Activated CD8-positive, alpha-beta T cell treated with anti-CD3 and anti-CD28 coated beads for 36 hours (primary cell): ENCODE measurements at regions of chr17 and their contacts with region 1.

Region 1: DNA sequence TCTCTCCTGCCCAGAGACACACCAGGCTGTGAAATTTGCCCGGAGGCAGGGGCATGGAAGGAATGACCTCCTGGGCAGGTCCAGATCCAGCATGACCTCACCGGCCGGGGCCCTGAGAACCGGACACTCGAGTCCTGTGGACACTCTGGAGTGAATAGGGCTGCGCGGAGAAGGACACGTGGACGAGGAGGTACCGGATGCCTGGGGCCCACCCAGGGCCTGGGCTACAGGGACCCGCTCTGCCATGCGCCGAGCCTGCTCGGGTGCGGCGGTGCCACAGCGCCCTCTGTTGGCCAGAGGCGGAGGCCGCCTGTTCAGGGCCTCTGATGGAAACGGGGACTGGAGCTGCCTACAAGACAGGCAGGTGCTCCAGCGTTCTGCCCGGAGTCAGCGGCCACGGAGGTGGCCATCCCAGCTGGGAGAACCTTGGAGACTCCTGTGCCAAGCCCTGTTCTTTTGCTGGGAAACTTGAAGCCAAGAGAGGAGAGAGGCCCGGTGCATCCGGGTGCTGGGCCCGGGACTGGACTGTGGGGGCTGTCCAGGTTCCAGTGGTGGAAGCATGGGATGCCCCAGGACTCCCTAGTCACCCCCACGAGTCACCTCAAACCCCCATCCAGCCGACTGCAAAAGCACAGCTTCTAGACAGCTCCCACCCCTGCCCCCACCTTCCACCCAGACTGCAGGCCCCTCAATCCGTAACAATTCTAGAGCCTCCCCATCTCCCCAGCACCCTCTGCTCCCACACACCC is 19.3 kb upstream of the NXPH3 start:
- DNase-seq: peak; percentile 90
- ATAC-seq: peak; percentile 98
- H3K4me3 Mint-ChIP-seq: no peak overlapping the region
- H3K27ac Mint-ChIP-seq: peak overlapping the region; percentile 20
- H3K4me1 Mint-ChIP-seq: peaks cover 2% of the 10 kb centered on the region
- H3K27me3 Mint-ChIP-seq: peaks cover 2% of the 10 kb centered on the region
- CTCF ChIP-seq: peak; percentile 98

Region 2: GRCh38 chr17:49327835-49328784 is 228.3 kb before region 1 on chr17:
- CTCF ChIA-PET with region 1: no interaction called
- POLR2A ChIA-PET with region 1: no interaction called
- intact Hi-C with region 1: no loop called
- DNase-seq: no peak
- ATAC-seq: peak; percentile 69
- H3K4me3 Mint-ChIP-seq: no peak overlapping the region
- H3K27ac Mint-ChIP-seq: no peak overlapping the region
- H3K4me1 Mint-ChIP-seq: peaks cover 33% of the 10 kb centered on the region
- H3K27me3 Mint-ChIP-seq: no peaks in the 10 kb centered on the region
- CTCF ChIP-seq: no peak

Region 3: GRCh38 chr17:49401971-49402611 is 154.3 kb before region 1 on chr17:
- CTCF ChIA-PET with region 1: interaction called, 160 read pairs
- POLR2A ChIA-PET with region 1: no interaction called
- intact Hi-C with region 1: no loop called
- DNase-seq: no peak
- ATAC-seq: no peak
- H3K4me3 Mint-ChIP-seq: no peak overlapping the region
- H3K27ac Mint-ChIP-seq: no peak overlapping the region
- H3K4me1 Mint-ChIP-seq: peaks cover 21% of the 10 kb centered on the region
- H3K27me3 Mint-ChIP-seq: no peaks in the 10 kb centered on the region
- CTCF ChIP-seq: no peak

Region 4: GRCh38 chr17:49434821-49435670 is 121.4 kb before region 1 on chr17:
- CTCF ChIA-PET with region 1: interaction called, 152 read pairs
- POLR2A ChIA-PET with region 1: interaction called, 5 read pairs
- intact Hi-C with region 1: loop called (anchors 5 kb)
- DNase-seq: peak; percentile 64
- ATAC-seq: peak; percentile 53
- H3K4me3 Mint-ChIP-seq: no peak overlapping the region
- H3K27ac Mint-ChIP-seq: no peak overlapping the region
- H3K4me1 Mint-ChIP-seq: no peaks in the 10 kb centered on the region
- H3K27me3 Mint-ChIP-seq: peaks cover 22% of the 10 kb centered on the region
- CTCF ChIP-seq: peak; percentile 95

Region 5: GRCh38 chr17:49496183-49496866 is 60.1 kb before region 1 on chr17:
- CTCF ChIA-PET with region 1: interaction called, 81 read pairs
- POLR2A ChIA-PET with region 1: no interaction called
- intact Hi-C with region 1: loop called (anchors 10 kb)
- DNase-seq: peak; percentile 89
- ATAC-seq: peak; percentile 83
- H3K4me3 Mint-ChIP-seq: peak overlapping the region; percentile 63
- H3K27ac Mint-ChIP-seq: no peak overlapping the region
- H3K4me1 Mint-ChIP-seq: peaks cover 22% of the 10 kb centered on the region
- H3K27me3 Mint-ChIP-seq: peaks cover 59% of the 10 kb centered on the region
- CTCF ChIP-seq: peak; percentile 86

Region 6: GRCh38 chr17:49567871-49568694 is 11.7 kb after region 1 on chr17:
- CTCF ChIA-PET with region 1: interaction called, 68 read pairs
- POLR2A ChIA-PET with region 1: interaction called, 3 read pairs
- intact Hi-C with region 1: no loop called
- DNase-seq: peak; percentile 90
- ATAC-seq: peak; percentile 61
- H3K4me3 Mint-ChIP-seq: peak overlapping the region; percentile 60
- H3K27ac Mint-ChIP-seq: no peak overlapping the region
- H3K4me1 Mint-ChIP-seq: peaks cover 29% of the 10 kb centered on the region
- H3K27me3 Mint-ChIP-seq: peaks cover 20% of the 10 kb centered on the region
- CTCF ChIP-seq: peak; percentile 97

Region 7: DNA sequence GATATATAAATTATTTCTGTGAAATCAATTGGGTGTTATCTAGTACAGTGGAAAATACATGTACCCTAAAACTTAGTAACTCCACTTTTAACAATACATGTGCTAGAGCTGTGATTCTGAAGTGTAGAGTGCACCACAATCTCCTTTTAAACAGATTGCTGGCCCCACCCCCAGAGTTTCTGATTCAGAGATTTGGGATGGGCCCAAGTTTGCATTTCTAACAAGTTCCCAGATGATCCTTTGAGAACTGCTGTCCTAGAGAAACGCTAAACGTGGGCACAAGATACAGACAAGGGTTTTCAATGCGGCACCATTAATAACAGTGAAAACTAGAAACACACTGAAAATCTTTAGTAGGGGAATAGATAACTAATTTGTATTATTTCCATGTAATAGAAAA is 68.5 kb after region 1 on chr17:
- CTCF ChIA-PET with region 1: no interaction called
- POLR2A ChIA-PET with region 1: no interaction called
- intact Hi-C with region 1: no loop called
- DNase-seq: no peak
- ATAC-seq: no peak
- H3K4me3 Mint-ChIP-seq: no peak overlapping the region
- H3K27ac Mint-ChIP-seq: no peak overlapping the region
- H3K4me1 Mint-ChIP-seq: peaks cover 24% of the 10 kb centered on the region
- H3K27me3 Mint-ChIP-seq: no peaks in the 10 kb centered on the region
- CTCF ChIP-seq: no peak